PC-3 (cell line): ENCODE measurements at regions of chr13 and their contacts with region 1.

Region 1: DNA sequence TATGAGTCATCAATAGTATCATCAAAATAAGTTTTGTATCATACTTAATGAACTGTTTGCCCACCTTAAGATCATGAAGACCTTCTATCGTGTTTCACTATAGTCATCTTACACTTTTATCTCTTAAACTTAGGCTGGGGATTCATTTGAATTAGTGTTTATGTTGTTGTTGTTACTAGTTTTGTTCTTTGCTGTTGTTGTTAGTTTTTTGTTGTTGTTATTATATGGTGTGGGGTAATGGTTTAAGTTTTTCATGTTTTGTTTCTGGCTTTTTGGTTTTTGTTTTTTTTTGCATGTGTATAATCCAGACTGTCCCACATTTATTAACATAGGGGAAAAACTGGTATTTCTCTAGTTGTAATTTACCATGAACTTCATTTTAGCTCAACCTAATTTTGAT is 965.1 kb upstream of the MIR17HG start:
- DNase-seq: no peak
- ATAC-seq: no peak
- H3K4me3 ChIP-seq: no peak overlapping the region
- H3K27ac ChIP-seq: no peak overlapping the region
- H3K4me1 ChIP-seq: no peaks in the 10 kb centered on the region
- H3K27me3 ChIP-seq: no peaks in the 10 kb centered on the region
- CTCF ChIP-seq: no peak

Region 2: GRCh38 chr13:90352763-90353162 is 29.7 kb before region 1 on chr13:
- CTCF ChIA-PET with region 1: no interaction called
- POLR2A ChIA-PET with region 1: no interaction called
- intact Hi-C with region 1: loop called (anchors 2 kb)
- DNase-seq: no peak
- ATAC-seq: no peak
- H3K4me3 ChIP-seq: no peak overlapping the region
- H3K27ac ChIP-seq: no peak overlapping the region
- H3K4me1 ChIP-seq: no peaks in the 10 kb centered on the region
- H3K27me3 ChIP-seq: no peaks in the 10 kb centered on the region
- CTCF ChIP-seq: no peak